ENCODE measurements at regions of chr3 and their contacts with region 1.

Region 1: GRCh38 chr3:151156618-151157216 is 46.3 kb downstream of the GPR171 start:
- DNase-seq: peak; percentile 66 to 81
- H3K4me3 ChIP-seq: no peak overlapping the region
- H3K4me1 ChIP-seq: peaks cover 20% of the 10 kb centered on the region
- H3K27me3 ChIP-seq: no peaks in the 10 kb centered on the region

Region 2: DNA sequence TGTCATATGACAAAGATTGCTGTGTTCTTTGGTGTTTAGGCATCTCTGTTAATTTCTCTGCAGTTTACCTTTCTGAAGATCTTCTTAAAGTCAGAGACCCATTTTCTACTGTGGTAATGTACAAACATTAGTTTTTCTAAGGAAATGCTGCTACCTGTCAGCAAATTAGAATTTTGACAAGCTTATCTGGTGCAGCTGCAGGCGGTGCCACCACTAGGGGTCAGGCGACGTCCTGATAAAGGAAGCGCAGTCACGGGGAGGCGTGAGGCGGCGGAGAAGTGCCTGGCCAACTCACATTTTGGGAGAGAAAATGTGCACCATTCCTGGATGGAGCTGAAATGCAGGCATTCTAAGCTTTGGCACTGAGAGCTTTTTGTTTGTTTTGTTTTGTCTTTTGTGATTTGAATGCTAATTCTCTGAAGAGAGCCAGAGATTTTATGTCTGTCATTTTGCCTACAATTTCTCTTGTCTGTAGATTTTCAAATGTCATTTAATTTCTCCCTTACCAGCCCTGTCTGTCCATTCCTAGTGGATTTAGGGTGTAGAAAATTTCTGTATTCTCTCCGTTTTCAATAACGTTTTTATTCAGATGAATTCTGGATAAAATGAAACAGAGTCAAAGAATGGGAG is 368.9 kb before region 1 on chr3:
- in situ Hi-C with region 1: loop called (anchors 10 kb)
- DNase-seq: peak; percentile 73 to 93
- H3K4me3 ChIP-seq: no peak overlapping the region
- H3K4me1 ChIP-seq: peaks cover 5% of the 10 kb centered on the region
- H3K27me3 ChIP-seq: peaks cover 10% of the 10 kb centered on the region

Measured in HAP-1 (cell line).